Endothelial cell of umbilical vein (primary cell): ENCODE measurements at regions of chr18 and their contacts with region 1.

Region 1: DNA sequence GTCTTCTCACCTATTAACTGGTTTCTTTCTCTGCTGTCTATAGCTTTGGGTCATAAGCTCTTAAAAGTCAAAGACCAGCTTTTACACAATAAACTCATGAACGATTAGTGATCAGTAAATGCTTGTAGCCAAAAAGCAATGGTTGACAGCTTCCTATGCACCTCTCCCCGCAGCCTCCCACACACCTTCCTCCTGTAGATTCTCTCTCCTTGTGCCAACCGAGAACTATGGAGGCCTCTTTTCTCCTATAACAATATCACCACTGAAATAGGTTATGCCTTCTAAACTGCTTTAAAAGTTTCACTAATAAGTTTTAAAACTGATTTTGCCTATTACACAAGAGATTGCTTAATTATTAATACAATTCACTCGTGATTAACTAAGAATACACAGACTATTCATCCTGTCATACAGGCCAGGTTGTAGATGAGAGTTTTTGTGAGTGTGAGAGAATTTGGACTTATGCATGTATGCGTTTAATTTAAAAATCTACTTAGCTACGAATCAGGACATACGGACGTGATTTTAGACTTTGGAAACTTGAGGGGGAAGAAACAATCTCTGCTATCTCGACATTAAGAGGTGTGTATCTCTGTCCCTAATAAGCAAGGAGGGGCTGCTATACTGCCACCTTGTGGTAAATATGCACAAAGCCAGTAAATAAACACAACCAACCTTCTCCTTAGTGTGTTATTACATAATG is 229.1 kb upstream of the RBBP8 start:
- DNase-seq: peak; percentile 71
- H3K4me3 ChIP-seq: no peak overlapping the region
- H3K27ac ChIP-seq: no peak overlapping the region
- H3K4me1 ChIP-seq: peaks cover 4% of the 10 kb centered on the region
- H3K27me3 ChIP-seq: no peaks in the 10 kb centered on the region
- CTCF ChIP-seq: peak; percentile 66 to 69
- POLR2A ChIP-seq: no peak

Region 2: GRCh38 chr18:21914739-21915319 is 789.2 kb before region 1 on chr18:
- CTCF ChIA-PET with region 1: no interaction called
- POLR2A ChIA-PET with region 1: no interaction called
- dilution Hi-C with region 1: no loop called
- intact Hi-C with region 1: loop called (anchors 2 kb)
- DNase-seq: peak; percentile 81
- H3K4me3 ChIP-seq: no peak overlapping the region
- H3K27ac ChIP-seq: no peak overlapping the region
- H3K4me1 ChIP-seq: no peaks in the 10 kb centered on the region
- H3K27me3 ChIP-seq: peaks cover 4% of the 10 kb centered on the region in 2 experiments
- CTCF ChIP-seq: peak; percentile 63 to 66
- POLR2A ChIP-seq: no peak

Region 3: DNA sequence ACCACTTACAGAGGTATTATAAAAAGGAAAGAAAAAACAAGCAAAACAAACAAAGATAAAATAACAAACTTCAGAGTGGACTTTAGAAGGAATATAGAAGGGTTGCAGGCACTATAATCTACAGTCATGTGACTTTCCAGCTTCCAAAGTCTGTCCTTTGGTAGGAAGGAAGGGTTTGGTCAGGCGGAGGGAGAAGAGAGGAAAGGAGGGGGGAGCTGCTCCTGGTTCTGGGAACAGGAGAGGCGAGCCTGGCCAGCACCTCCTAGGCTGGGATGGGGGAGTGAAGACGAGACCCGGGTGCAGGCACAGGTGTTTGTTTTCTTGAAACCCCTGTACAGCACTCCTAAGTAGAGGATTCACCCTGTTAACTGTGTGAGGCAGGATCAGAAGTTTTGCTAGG is 588.5 kb before region 1 on chr18:
- CTCF ChIA-PET with region 1: no interaction called
- POLR2A ChIA-PET with region 1: no interaction called
- dilution Hi-C with region 1: no loop called
- intact Hi-C with region 1: no loop called
- DNase-seq: no peak
- H3K4me3 ChIP-seq: no peak overlapping the region
- H3K27ac ChIP-seq: no peak overlapping the region
- H3K4me1 ChIP-seq: no peaks in the 10 kb centered on the region
- H3K27me3 ChIP-seq: peaks cover 21 to 23% of the 10 kb centered on the region in 2 experiments
- CTCF ChIP-seq: no peak
- POLR2A ChIP-seq: no peak

Region 4: GRCh38 chr18:22332590-22332989 is 371.4 kb before region 1 on chr18:
- CTCF ChIA-PET with region 1: no interaction called
- POLR2A ChIA-PET with region 1: no interaction called
- dilution Hi-C with region 1: no loop called
- intact Hi-C with region 1: loop called (anchors 10 kb)
- DNase-seq: no peak
- H3K4me3 ChIP-seq: no peak overlapping the region
- H3K27ac ChIP-seq: no peak overlapping the region
- H3K4me1 ChIP-seq: peaks cover 10% of the 10 kb centered on the region
- H3K27me3 ChIP-seq: no peaks in the 10 kb centered on the region
- CTCF ChIP-seq: no peak
- POLR2A ChIP-seq: no peak

Region 5: DNA sequence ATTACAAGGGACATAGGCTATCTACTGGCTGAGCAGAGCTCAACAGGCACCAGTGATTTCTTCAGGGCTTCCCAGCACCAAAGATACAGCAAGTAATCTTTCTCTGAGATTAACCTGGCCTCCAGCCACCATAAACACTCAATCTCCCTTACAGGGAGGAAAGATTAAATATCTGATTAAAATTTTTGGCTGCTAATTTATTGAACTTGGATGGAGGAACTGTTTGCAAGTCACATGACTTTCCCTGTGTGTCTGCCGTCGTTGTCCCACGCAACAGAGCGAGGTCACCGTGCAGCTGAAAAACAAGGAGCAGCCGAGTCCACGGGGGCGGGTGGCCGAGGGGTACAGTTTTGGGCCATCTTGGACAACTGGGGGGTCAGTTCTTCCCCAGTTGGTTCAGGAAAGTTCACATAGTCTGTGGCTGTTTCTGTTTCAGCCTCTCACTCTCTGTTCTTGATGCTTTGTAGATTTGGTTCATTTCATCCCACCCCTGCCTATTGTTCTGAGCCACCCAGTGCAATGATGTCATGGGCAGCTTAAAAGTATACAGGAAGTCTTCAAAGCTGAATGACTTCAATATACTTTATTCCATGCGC is 99.5 kb before region 1 on chr18:
- CTCF ChIA-PET with region 1: interaction called, 7 read pairs
- POLR2A ChIA-PET with region 1: no interaction called
- dilution Hi-C with region 1: no loop called
- intact Hi-C with region 1: loop called (anchors 2 kb)
- DNase-seq: peak; percentile 91
- H3K4me3 ChIP-seq: peak overlapping the region in 2 of 3 experiments; percentile 1 to 63
- H3K27ac ChIP-seq: peak overlapping the region; percentile 81
- H3K4me1 ChIP-seq: peaks cover 32% of the 10 kb centered on the region
- H3K27me3 ChIP-seq: peaks cover 0 to 15% of the 10 kb centered on the region in 2 experiments
- CTCF ChIP-seq: no peak
- POLR2A ChIP-seq: no peak

Region 6: GRCh38 chr18:22667616-22668422 is 36.2 kb before region 1 on chr18:
- CTCF ChIA-PET with region 1: interaction called, 6 read pairs
- POLR2A ChIA-PET with region 1: no interaction called
- dilution Hi-C with region 1: no loop called
- intact Hi-C with region 1: loop called (anchors 2 kb)
- DNase-seq: peak; percentile 96
- H3K4me3 ChIP-seq: no peak overlapping the region
- H3K27ac ChIP-seq: peak overlapping the region; percentile 79
- H3K4me1 ChIP-seq: peaks cover 37% of the 10 kb centered on the region
- H3K27me3 ChIP-seq: no peaks in the 10 kb centered on the region
- CTCF ChIP-seq: no peak
- POLR2A ChIP-seq: peak; percentile 49